HepG2 (cell line): ENCODE measurements at regions of chr7 and their contacts with region 1.

Region 1: GRCh38 chr7:98514211-98515031 is 102.7 kb upstream of the NPTX2 start:
- DNase-seq: no peak
- ATAC-seq: no peak
- H3K4me3 ChIP-seq: no peak overlapping the region
- H3K27ac ChIP-seq: no peak overlapping the region
- H3K4me1 ChIP-seq: no peaks in the 10 kb centered on the region
- H3K27me3 ChIP-seq: no peaks in the 10 kb centered on the region
- CTCF ChIP-seq: no peak
- EP300 ChIP-seq: no peak
- POLR2A ChIP-seq: no peak
- RAD21 ChIP-seq: no peak

Region 2: DNA sequence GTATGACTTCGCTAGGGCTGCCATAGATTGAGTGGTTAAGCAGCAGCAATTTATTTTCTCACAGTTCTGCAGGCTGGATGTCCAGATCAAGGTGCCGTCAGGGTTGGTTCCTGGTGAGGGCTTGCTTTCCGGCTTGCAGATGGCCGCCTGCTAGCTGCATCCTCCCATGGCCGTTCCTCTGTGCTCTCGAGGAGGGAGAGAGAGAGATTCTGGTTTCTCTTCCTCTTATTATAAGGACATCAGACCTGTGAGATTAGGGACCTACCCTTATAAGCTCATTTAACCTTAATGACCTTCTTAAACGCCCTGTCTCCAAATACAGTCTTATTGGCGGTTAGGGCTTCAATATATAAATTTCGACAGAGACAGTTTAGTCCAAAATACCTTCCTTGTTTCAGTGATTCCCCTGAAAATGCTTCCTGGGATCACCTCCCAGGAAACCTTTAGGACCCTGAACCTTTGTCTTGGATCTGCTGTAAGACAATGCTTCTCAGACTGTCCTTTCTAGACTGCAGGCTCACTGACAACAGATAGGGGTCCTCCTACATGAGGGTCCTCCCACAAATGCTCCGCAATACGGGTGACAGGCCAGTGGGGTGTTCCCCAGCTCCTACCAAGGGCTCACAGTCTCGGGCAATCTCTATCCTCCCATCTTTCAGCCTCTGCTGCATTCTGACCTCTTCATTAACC is 31.0 kb before region 1 on chr7:
- CTCF ChIA-PET with region 1: no interaction called
- POLR2A ChIA-PET with region 1: no interaction called
- in situ Hi-C with region 1: no loop called
- intact Hi-C with region 1: loop called (anchors 1 kb)
- DNase-seq: no peak
- ATAC-seq: no peak
- H3K4me3 ChIP-seq: no peak overlapping the region
- H3K27ac ChIP-seq: no peak overlapping the region
- H3K4me1 ChIP-seq: peaks cover 22% of the 10 kb centered on the region
- H3K27me3 ChIP-seq: peaks cover 2 to 11% of the 10 kb centered on the region in 2 experiments; a peak in 2 of 5 replicates
- CTCF ChIP-seq: no peak
- EP300 ChIP-seq: no peak
- POLR2A ChIP-seq: no peak
- RAD21 ChIP-seq: no peak

Region 3: GRCh38 chr7:99305473-99306260 is 791.2 kb after region 1 on chr7:
- CTCF ChIA-PET with region 1: no interaction called
- POLR2A ChIA-PET with region 1: no interaction called
- in situ Hi-C with region 1: no loop called
- intact Hi-C with region 1: no loop called
- DNase-seq: no peak
- ATAC-seq: no peak
- H3K4me3 ChIP-seq: no peak overlapping the region
- H3K27ac ChIP-seq: no peak overlapping the region
- H3K4me1 ChIP-seq: no peaks in the 10 kb centered on the region
- H3K27me3 ChIP-seq: no peaks in the 10 kb centered on the region
- CTCF ChIP-seq: no peak
- EP300 ChIP-seq: no peak
- POLR2A ChIP-seq: no peak
- RAD21 ChIP-seq: no peak